ENCODE measurements at regions of chr9 and their contacts with region 1.

Region 1: GRCh38 chr9:124257844-124258606 is at the start of gene NEK6:
- H3K4me3 Mint-ChIP-seq: peak within 1 kb of the TSS; percentile 94
- H3K27ac Mint-ChIP-seq: peak within 1 kb of the TSS; percentile 90
- H3K4me1 Mint-ChIP-seq: peaks cover 75% of the 10 kb centered on the region
- H3K27me3 Mint-ChIP-seq: no peaks in the 10 kb centered on the region

Region 2: GRCh38 chr9:124126571-124127289 is 131.3 kb before region 1 on chr9:
- intact Hi-C with region 1: loop called (anchors 5 kb)
- H3K4me3 Mint-ChIP-seq: no peak overlapping the region
- H3K27ac Mint-ChIP-seq: no peak overlapping the region
- H3K4me1 Mint-ChIP-seq: peaks cover 24% of the 10 kb centered on the region
- H3K27me3 Mint-ChIP-seq: peaks cover 4% of the 10 kb centered on the region

Region 3: DNA sequence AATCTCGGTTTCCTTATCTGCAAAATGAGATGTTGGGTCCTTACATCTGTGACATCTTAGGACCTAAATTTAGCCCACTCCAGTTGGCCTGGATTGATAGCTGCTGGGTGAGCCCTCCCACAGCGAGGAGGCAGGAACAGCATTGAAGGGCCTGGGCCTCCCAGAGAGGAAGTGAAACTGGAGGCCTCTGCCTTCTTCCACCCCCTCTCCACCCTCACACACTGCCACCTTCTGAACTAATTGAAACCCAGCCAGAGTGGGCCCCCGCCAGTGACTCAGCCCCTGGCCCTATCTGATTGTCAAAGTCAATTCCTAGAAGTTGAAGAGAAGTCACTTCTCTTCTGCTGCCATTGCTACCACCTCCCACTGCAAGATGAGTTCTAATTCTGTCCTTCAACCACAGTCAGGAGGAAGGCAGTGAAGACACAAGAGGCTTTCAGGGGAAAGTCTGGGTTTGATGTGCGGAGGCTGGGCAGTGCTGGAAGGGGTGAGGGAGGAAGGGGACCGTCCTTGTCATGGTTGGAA is 55.5 kb before region 1 on chr9:
- intact Hi-C with region 1: loop called (anchors 5 kb)
- H3K4me3 Mint-ChIP-seq: peak overlapping the region; percentile 79
- H3K27ac Mint-ChIP-seq: peak overlapping the region; percentile 90
- H3K4me1 Mint-ChIP-seq: peaks cover 98% of the 10 kb centered on the region
- H3K27me3 Mint-ChIP-seq: no peaks in the 10 kb centered on the region

Region 4: DNA sequence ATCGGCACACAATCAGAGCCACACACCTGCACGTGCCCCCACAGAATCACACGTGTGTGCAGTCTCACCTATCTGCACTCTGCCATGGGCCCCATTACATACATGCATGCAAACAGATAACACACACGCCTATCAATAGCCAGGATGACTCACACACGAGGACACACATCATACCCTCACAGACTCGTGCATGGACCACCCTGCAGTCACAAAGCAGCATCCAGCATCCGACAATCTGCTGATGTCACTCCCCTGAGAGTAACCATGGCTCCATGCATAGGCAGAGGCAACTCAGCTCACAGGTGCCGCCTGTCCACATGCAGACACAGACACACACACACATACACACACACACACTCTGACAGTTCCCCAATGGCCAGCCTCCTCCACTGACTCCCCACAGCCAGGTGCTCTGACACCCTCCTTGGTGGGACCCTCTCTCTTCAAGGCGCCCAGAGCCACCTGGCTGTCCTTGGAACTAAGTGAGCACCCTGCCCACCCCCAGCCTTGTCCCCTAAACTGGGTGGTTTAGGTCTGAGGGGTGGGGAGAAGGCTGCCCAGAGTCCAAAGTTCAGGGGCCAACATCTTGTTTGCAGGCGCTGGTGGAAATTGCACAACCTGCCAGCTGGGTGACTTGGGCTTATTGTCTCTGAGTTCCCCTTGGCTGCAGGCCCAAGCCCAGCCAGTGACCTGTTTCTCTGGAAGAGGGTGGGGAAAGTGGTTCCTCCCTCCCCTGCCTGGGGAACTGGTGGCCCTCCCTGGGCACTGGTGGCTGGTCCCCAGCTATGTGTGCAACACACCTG is 34.9 kb before region 1 on chr9:
- intact Hi-C with region 1: loop called (anchors 5 kb)
- H3K4me3 Mint-ChIP-seq: peak overlapping the region; percentile 46
- H3K27ac Mint-ChIP-seq: peak overlapping the region; percentile 84
- H3K4me1 Mint-ChIP-seq: peaks cover 87% of the 10 kb centered on the region
- H3K27me3 Mint-ChIP-seq: no peaks in the 10 kb centered on the region

Region 5: DNA sequence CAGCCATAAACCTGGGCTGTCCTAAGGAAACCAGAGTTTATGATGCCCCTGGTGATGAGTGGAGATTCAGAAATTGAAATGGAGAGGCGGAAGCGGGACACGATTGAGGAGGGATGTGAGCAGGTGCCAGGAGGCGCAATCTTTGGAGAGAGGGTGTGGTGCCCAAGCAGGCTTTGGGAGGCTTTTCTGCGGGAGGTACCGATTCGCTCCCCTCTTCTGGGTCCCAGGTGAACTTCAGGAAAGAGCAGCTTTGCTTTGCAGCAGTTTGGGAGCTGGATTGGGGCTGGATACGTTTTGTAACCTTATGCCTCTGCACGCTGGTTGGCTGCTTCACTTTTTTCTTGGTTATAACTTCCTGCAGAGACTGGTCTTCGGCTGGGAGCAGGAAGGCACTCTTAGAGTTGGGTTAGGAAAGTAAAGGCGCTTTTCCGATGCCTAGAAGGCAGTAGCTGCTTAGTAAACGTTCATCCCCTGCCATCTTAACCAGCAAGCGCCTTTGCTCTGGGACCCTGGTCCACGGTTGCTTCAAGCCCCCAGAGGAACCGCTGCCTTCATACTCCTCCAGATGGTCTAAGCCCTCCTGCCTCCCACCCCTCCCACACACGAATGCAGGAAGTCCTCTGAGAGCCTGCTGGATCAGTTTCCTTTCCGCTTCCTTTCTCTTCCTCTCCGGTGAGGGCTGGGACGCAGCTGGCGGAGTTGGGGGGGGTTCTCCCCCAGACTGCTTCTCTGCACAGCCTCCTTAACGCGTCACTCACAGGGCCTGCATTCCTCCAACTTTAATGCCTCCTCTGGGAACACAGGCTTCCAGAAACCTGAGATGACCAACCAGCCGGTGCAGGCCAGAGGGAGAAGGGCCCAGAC is 15.5 kb before region 1 on chr9:
- intact Hi-C with region 1: loop called (anchors 2 kb)
- H3K4me3 Mint-ChIP-seq: peak overlapping the region; percentile 60
- H3K27ac Mint-ChIP-seq: peak overlapping the region; percentile 72
- H3K4me1 Mint-ChIP-seq: peaks cover 58% of the 10 kb centered on the region
- H3K27me3 Mint-ChIP-seq: no peaks in the 10 kb centered on the region

Region 6: DNA sequence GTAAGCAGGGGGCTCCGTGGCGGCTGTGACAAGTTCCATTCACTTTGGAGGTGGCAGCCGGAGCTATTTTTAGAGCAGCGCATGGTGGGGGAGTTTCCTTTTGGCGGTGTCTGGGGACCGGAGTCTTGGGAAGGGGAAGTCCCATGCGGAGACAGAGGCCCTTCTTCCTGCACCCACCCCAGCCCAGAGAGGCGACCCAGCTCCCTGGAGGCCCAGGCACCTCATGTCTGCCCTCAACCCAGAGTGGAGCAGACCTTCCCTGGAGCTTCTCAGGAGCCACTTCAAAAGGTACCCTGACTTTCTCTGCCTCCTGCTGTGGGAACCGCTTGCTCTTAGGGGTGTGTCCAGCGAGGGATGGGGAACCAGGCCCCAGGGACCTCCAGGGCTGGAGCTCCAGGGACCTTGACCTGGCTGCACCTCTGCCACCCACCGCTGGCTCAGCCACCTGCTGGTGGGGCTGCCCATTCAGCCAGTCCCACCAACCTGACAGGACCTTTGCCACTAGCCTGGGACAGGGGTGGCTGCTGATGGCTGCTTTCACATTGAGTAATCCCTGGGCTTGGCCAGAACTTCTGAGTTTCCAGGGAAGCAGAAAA is 33.9 kb after region 1 on chr9:
- intact Hi-C with region 1: loop called (anchors 5 kb)
- H3K4me3 Mint-ChIP-seq: peak overlapping the region; percentile 52
- H3K27ac Mint-ChIP-seq: peak overlapping the region; percentile 66
- H3K4me1 Mint-ChIP-seq: peaks cover 100% of the 10 kb centered on the region
- H3K27me3 Mint-ChIP-seq: no peaks in the 10 kb centered on the region

Measured in dendritic cell treated with granulocyte-macrophage colony-stimulating factor and Interleukin-4, amounts not matched to agents 40 ng/mL and 50 ng/mL, for 4 days (primary cell).